K562 (cell line): ENCODE measurements at regions of chr4 and their contacts with region 1.

Region 1: DNA sequence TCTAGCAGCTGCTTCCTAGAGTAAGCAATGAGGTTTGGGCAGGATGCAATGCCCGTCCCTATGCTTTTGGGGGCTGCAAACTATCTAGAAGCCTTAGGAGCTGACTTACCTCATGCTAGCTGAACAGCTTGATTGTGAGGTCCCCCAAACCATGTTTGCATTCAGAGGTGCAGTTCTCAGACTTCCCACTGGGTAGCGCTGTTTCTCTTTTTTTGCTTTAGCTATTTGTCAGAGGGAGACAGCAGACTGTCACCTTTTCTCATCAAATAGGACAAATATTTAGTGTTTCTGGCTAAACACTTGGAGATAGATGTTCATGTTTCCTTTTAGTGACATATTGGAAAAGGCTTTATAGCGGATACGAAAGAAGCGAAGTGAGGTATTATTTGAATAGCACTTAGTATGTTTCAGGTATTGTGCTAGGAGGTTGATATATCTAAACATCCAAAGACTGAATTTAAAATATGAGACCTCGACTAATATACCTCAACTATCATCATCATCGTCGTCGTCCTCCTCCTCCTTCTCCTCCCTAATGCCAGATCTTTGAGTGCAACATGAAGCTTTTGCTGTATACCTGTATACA is 18.7 kb upstream of the TMEM192 start:
- DNase-seq: peak; percentile 52 to 73 (median 59)
- ATAC-seq: peak; percentile 93
- H3K4me3 ChIP-seq: no peak overlapping the region
- H3K27ac ChIP-seq: no peak overlapping the region
- H3K4me1 ChIP-seq: no peaks in the 10 kb centered on the region
- H3K27me3 ChIP-seq: peaks cover 0 to 9% of the 10 kb centered on the region in 2 experiments; a peak in 2 of 5 replicates
- CTCF ChIP-seq: peak; percentile 67 to 89 (median 87)
- EP300 ChIP-seq: no peak
- POLR2A ChIP-seq: no peak
- RAD21 ChIP-seq: peak; percentile 86 to 90

Region 2: DNA sequence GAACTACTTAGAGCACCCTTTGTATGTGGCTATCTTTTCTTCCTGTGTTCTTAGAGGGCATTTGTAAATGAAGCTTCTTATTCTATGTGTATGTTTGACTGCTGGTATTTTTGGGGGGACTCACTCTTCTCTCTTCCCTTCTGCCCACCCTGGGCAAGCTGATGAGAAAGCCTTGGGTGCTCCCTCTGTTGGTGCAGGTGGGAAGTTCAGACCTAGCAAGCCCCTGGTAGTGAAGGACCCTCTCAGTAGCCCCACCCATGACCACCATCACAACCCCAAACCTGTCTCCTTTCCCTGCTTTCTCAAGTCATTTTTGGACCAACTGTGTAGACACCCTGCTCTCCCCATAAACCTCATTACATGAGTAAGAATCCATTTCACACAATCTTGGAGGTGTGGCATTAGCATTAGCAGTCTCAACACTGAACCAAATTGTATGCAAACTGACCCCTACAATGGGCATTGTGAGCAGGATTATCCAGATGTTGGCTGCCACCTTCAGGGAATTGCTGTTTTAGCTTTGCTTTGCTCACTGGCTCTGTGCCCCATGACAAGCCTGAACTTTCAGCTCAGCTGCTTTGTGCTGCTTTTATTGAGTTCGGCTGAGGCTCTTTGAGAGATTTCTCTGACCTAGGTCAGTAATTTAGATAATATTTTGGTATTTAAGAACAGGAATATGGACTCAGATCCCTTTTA is 181.7 kb before region 1 on chr4:
- CTCF ChIA-PET with region 1: no interaction called
- POLR2A ChIA-PET with region 1: no interaction called
- in situ Hi-C with region 1: no loop called
- intact Hi-C with region 1: no loop called
- DNase-seq: no peak
- ATAC-seq: no peak
- H3K4me3 ChIP-seq: no peak overlapping the region
- H3K27ac ChIP-seq: no peak overlapping the region
- H3K4me1 ChIP-seq: no peaks in the 10 kb centered on the region
- H3K27me3 ChIP-seq: peaks cover 0 to 14% of the 10 kb centered on the region in 2 experiments; a peak in 2 of 5 replicates
- CTCF ChIP-seq: 0 out of 6 replicates have a peak, but pooled peaks of 2 of the 3 experiments have one; percentile 2 to 31
- EP300 ChIP-seq: no peak
- POLR2A ChIP-seq: no peak
- RAD21 ChIP-seq: no peak

Region 3: DNA sequence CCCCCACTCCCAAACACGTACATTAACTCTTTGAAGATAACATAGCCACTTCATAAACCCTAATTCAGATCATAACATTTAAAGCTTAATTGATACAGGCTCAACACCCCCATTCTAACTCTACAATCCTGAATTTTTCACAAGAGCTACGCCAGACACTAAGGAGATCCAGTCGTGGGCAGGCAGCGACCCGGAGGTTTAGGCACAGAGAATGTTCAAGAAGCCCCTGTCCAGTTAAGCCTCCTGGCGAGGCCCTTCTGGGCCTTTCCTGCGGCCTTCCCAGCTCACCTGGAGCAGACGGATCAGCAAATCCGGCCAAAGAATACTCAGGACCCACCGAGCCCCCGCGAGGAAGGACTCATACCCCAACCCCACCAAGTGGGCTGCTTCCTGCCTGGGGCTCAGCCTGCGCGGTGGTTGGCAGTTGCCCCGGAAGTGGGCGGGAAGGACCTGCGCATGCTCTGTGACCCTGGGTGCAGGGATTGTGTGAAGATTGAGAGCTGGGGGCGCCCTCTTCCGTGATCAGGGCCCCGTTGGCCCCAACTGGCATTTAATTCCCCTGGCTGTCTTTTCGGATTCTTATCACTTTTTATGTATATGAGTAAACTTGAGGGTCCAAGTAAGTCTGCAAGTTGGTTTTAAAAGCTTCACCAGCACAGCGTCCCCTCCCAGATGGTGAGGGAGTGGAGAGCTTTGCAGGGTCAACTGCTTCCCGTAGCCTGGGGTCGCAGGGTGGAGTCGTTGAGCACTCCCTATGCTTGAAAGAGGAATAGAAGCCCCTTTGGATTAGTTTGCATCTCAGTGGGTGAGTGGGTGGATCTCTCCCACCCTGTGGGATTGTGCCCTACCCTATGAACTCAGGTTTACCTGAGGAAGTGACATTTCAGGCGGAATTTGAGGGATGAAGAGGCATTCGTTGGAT is 153.8 kb before region 1 on chr4 and contains the start of gene TRIM61:
- CTCF ChIA-PET with region 1: no interaction called
- POLR2A ChIA-PET with region 1: no interaction called
- in situ Hi-C with region 1: no loop called
- intact Hi-C with region 1: no loop called
- DNase-seq: peak in 3 of 4 experiments; percentile 11 to 26 (median 18)
- ATAC-seq: peak; percentile 75
- H3K4me3 ChIP-seq: peak within 1 kb of the TSS; percentile 28; the same call in 1 of the 2 replicates
- H3K27ac ChIP-seq: no peak within 1 kb of the TSS; the same call in 2 of the 3 replicates
- H3K4me1 ChIP-seq: peaks cover 0 to 5% of the 10 kb centered on the region in 2 experiments; a peak in 2 of 5 replicates
- H3K27me3 ChIP-seq: no peaks in the 10 kb centered on the region; a peak in 2 of 5 replicates
- CTCF ChIP-seq: no peak
- EP300 ChIP-seq: no peak
- POLR2A ChIP-seq: no peak
- RAD21 ChIP-seq: no peak
- polyA plus RNA-seq, gene TRIM61: 0.80 to 0.92 TPM

Region 4: DNA sequence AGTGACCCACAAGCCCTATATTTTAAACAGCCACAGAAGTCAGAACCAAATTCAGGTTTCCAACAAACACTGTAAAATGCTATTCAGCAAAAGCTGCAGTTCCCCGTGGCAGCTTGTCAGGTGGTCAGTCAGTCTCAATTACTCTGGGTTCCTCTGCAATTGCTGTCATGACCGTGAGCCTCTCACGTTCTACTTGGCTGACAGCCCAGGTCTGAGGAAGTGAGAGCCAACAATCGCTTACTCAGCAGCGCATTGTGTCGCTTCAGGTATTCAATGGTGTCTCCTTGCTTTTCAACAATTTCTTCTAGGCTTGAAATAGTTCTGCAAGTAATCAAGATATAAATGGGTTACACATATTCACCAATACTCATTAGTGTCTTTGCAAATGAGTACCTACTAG is 51.9 kb before region 1 on chr4:
- CTCF ChIA-PET with region 1: no interaction called
- POLR2A ChIA-PET with region 1: no interaction called
- in situ Hi-C with region 1: no loop called
- intact Hi-C with region 1: no loop called
- DNase-seq: peak in 2 of 4 experiments; percentile 15 to 37
- ATAC-seq: peak; percentile 33; the same call in 1 of the 3 replicates
- H3K4me3 ChIP-seq: no peak overlapping the region
- H3K27ac ChIP-seq: no peak overlapping the region
- H3K4me1 ChIP-seq: no peaks in the 10 kb centered on the region; a peak in 1 of 5 replicates
- H3K27me3 ChIP-seq: no peaks in the 10 kb centered on the region
- CTCF ChIP-seq: no peak
- EP300 ChIP-seq: no peak
- POLR2A ChIP-seq: no peak
- RAD21 ChIP-seq: no peak

Region 5: DNA sequence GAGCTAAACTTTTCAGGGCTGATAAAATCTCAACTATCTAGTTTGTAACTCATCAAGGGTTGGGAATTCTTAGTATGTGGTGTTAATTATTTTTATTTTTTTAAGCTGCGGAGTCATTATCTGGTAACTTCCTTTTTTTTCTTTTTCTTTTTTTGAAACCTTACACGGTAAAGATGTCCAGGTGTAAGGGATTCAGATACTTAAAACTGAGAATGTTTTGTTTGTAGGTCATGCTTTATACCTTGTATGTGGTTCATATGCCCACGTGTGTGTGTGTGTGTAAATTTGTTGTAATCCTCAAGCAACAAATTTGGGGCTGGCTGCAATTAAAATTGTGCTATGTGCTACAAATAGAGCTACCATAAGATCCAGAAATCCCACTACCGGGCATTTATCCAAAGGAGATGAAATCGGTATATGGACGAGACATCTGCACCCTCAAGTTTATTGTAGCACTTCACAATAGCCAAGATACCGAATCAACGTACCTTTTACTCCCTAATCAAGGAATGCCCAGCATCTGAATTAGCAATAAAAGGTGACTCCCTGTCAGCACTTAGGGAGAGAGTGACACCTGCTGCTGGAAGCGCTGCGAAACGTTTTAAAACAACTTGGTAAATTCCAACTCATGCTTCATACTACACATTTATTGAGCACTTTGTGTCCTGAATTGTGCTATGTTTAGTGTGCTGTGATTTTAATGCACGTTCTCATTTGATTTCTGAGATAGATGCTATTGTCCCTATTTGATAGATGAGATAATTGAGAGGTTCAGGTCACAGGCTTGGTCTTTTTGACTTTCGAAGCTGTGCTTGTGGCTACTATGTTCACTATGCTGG is 212.2 kb after region 1 on chr4:
- CTCF ChIA-PET with region 1: no interaction called
- POLR2A ChIA-PET with region 1: no interaction called
- in situ Hi-C with region 1: no loop called
- intact Hi-C with region 1: loop called (anchors 5 kb)
- DNase-seq: no peak
- ATAC-seq: no peak
- H3K4me3 ChIP-seq: no peak overlapping the region
- H3K27ac ChIP-seq: no peak overlapping the region
- H3K4me1 ChIP-seq: peaks cover 0 to 8% of the 10 kb centered on the region in 2 experiments; a peak in 2 of 5 replicates
- H3K27me3 ChIP-seq: no peaks in the 10 kb centered on the region
- CTCF ChIP-seq: peak in 2 of 3 experiments; percentile 24 to 25; a peak in 2 of 6 replicates
- EP300 ChIP-seq: no peak
- POLR2A ChIP-seq: peak; percentile 78
- RAD21 ChIP-seq: peak in 1 of 2 experiments; percentile 22; a peak in 1 of 4 replicates

Region 6: GRCh38 chr4:165355900-165356300 is 224.6 kb after region 1 on chr4:
- CTCF ChIA-PET with region 1: no interaction called
- POLR2A ChIA-PET with region 1: no interaction called
- in situ Hi-C with region 1: no loop called
- intact Hi-C with region 1: loop called (anchors 1 kb)
- DNase-seq: peak in 1 of 4 experiments; percentile 34
- ATAC-seq: peak; percentile 67
- H3K4me3 ChIP-seq: no peak overlapping the region
- H3K27ac ChIP-seq: no peak overlapping the region
- H3K4me1 ChIP-seq: no peaks in the 10 kb centered on the region; a peak in 1 of 5 replicates
- H3K27me3 ChIP-seq: peaks cover 5 to 6% of the 10 kb centered on the region in 2 experiments; a peak in 2 of 5 replicates
- CTCF ChIP-seq: peak; percentile 37 to 46 (median 42); a peak in 5 of 6 replicates
- EP300 ChIP-seq: no peak
- POLR2A ChIP-seq: no peak
- RAD21 ChIP-seq: peak; percentile 45 to 49

Region 7: GRCh38 chr4:165403637-165404036 is 272.3 kb after region 1 on chr4:
- CTCF ChIA-PET with region 1: no interaction called
- POLR2A ChIA-PET with region 1: no interaction called
- in situ Hi-C with region 1: no loop called
- intact Hi-C with region 1: loop called (anchors 5 kb)
- DNase-seq: no peak
- ATAC-seq: peak; percentile 61
- H3K4me3 ChIP-seq: no peak overlapping the region
- H3K27ac ChIP-seq: no peak overlapping the region
- H3K4me1 ChIP-seq: no peaks in the 10 kb centered on the region
- H3K27me3 ChIP-seq: peaks cover 0 to 4% of the 10 kb centered on the region in 2 experiments; a peak in 4 of 5 replicates
- CTCF ChIP-seq: no peak
- EP300 ChIP-seq: no peak
- POLR2A ChIP-seq: no peak
- RAD21 ChIP-seq: no peak

Region 8: GRCh38 chr4:165464813-165465381 is 333.6 kb after region 1 on chr4:
- CTCF ChIA-PET with region 1: interaction called, 28 read pairs
- POLR2A ChIA-PET with region 1: no interaction called
- in situ Hi-C with region 1: loop called (anchors 5 kb)
- intact Hi-C with region 1: loop called (anchors 1 kb)
- DNase-seq: peak; percentile 60 to 66 (median 62)
- ATAC-seq: peak; percentile 75
- H3K4me3 ChIP-seq: no peak overlapping the region
- H3K27ac ChIP-seq: no peak overlapping the region
- H3K4me1 ChIP-seq: peaks cover 0 to 4% of the 10 kb centered on the region in 2 experiments; a peak in 2 of 5 replicates
- H3K27me3 ChIP-seq: no peaks in the 10 kb centered on the region
- CTCF ChIP-seq: peak; percentile 66 to 90 (median 70)
- EP300 ChIP-seq: no peak
- POLR2A ChIP-seq: no peak
- RAD21 ChIP-seq: peak; percentile 85 to 93

Region 9: GRCh38 chr4:165537028-165537648 is 405.8 kb after region 1 on chr4:
- CTCF ChIA-PET with region 1: no interaction called
- POLR2A ChIA-PET with region 1: no interaction called
- in situ Hi-C with region 1: no loop called
- intact Hi-C with region 1: loop called (anchors 1 kb)
- DNase-seq: peak; percentile 35 to 57 (median 46)
- ATAC-seq: peak; percentile 81
- H3K4me3 ChIP-seq: no peak overlapping the region
- H3K27ac ChIP-seq: no peak overlapping the region
- H3K4me1 ChIP-seq: no peaks in the 10 kb centered on the region
- H3K27me3 ChIP-seq: no peaks in the 10 kb centered on the region; a peak in 2 of 5 replicates
- CTCF ChIP-seq: peak; percentile 36 to 62 (median 55); a peak in 5 of 6 replicates
- EP300 ChIP-seq: no peak
- POLR2A ChIP-seq: no peak
- RAD21 ChIP-seq: peak; percentile 68 to 75

Region 10: GRCh38 chr4:166091912-166092510 is 960.7 kb after region 1 on chr4:
- CTCF ChIA-PET with region 1: no interaction called
- POLR2A ChIA-PET with region 1: no interaction called
- in situ Hi-C with region 1: loop called (anchors 25 kb)
- intact Hi-C with region 1: loop called (anchors 5 kb)
- DNase-seq: peak; percentile 13 to 48 (median 16)
- ATAC-seq: peak; percentile 71; the same call in 2 of the 3 replicates
- H3K4me3 ChIP-seq: no peak overlapping the region
- H3K27ac ChIP-seq: no peak overlapping the region
- H3K4me1 ChIP-seq: no peaks in the 10 kb centered on the region
- H3K27me3 ChIP-seq: no peaks in the 10 kb centered on the region
- CTCF ChIP-seq: peak; percentile 31 to 71 (median 40); a peak in 4 of 6 replicates
- EP300 ChIP-seq: no peak
- POLR2A ChIP-seq: no peak
- RAD21 ChIP-seq: peak; percentile 73 to 74